Thyroid gland (tissue), 4 donors: ENCODE measurements at regions of chr12 and their contacts with region 1.

Region 1: GRCh38 chr12:112012775-112013600 is at the starts of genes ERP29 and TMEM116:
- DNase-seq: peak; percentile 100
- H3K4me3 ChIP-seq: peak within 1 kb of the TSS; percentile 77 to 93 (median 90)
- H3K27ac ChIP-seq: peak within 1 kb of the TSS; percentile 92 to 98 (median 95)
- H3K4me1 ChIP-seq: peaks cover 22 to 42% of the 10 kb centered on the region in 2 donors
- H3K27me3 ChIP-seq: no peaks in the 10 kb centered on the region
- CTCF ChIP-seq: peak; percentile 16 to 79 (median 62)
- POLR2A ChIP-seq: peak; percentile 85 to 95
- total RNA-seq, gene ERP29: 66.1 to 93.3 (median 80.7) TPM
- total RNA-seq, gene TMEM116: 20.0 to 33.0 (median 26.6) TPM

Region 2: GRCh38 chr12:111584959-111585358 is 428.0 kb before region 1 on chr12:
- intact Hi-C with region 1: no loop called
- DNase-seq: no peak
- H3K4me3 ChIP-seq: no peak overlapping the region
- H3K27ac ChIP-seq: no peak overlapping the region
- H3K4me1 ChIP-seq: no peaks in the 10 kb centered on the region
- H3K27me3 ChIP-seq: no peaks in the 10 kb centered on the region
- CTCF ChIP-seq: no peak
- POLR2A ChIP-seq: no peak

Region 3: DNA sequence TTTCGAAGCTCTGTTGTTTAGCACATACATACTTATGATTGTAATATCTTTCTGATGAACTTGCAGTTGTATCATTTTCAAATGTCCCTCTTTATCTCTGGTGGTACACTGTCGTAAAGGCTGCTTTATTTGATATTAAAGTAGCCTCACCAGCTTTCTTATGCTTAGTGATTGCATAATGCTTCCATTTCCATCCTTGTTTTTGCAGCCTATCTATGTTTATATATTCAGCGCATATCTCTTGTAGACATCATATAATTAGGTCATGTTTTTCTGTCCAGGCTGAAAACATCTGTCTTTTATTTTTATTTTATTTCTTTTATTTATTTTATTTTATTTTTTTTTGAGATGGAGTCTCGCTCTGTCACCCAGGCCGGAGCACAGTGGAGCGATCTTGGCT is 292.5 kb before region 1 on chr12:
- intact Hi-C with region 1: no loop called
- DNase-seq: no peak
- H3K4me3 ChIP-seq: no peak overlapping the region
- H3K27ac ChIP-seq: no peak overlapping the region
- H3K4me1 ChIP-seq: peaks cover 0 to 4% of the 10 kb centered on the region in 2 donors
- H3K27me3 ChIP-seq: no peaks in the 10 kb centered on the region
- CTCF ChIP-seq: no peak
- POLR2A ChIP-seq: no peak

Region 4: DNA sequence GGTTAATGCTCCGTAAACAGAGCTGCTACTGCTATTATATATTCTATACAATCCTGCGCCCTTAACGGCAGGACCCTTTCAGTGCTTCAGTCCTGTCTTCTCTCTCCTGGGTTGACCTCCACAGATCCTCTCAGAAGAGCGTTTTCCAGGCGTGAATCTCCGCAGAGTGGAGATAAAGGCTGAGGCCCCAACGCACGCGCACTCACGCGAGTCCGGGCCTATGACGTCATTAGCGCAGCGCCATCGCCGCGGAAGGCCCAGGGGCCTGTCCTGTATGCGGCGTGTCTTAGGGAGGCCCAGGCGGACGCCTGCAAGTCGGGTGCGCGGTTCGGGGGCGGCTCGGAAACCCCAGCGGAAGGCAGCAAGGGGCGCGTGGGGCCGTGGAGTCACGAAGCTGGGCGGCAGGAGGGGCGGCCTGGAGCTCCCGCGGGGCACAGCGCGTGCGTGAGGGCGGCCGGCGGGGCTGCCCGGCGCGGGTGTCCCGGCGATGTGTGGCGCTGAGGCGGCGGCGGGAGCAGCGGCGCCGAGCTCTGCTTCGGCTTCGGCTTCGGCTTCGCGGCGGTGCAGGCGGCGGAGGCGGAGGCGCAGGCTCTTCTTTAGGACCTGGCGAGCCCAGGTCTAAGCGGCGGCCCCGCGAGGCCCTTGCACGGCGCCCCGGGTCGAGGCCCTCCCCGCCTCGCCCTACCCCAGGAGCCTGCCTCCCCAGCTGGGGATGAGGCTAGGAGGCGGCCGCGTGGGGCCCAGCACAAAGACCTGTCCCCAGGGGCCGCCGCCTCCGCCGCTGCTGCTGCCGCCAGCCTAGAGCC is 171.0 kb before region 1 on chr12 and contains the start of gene MAPKAPK5:
- intact Hi-C with region 1: loop called (anchors 10 kb)
- DNase-seq: peak; percentile 90 to 93
- H3K4me3 ChIP-seq: peak within 1 kb of the TSS; percentile 87 to 90 (median 88)
- H3K27ac ChIP-seq: peak within 1 kb of the TSS; percentile 82 to 91 (median 86)
- H3K4me1 ChIP-seq: peaks cover 15 to 29% of the 10 kb centered on the region in 2 donors
- H3K27me3 ChIP-seq: no peaks in the 10 kb centered on the region
- CTCF ChIP-seq: peak in 1 of 6 experiments; percentile 33
- POLR2A ChIP-seq: peak in 1 of 2 donors; percentile 62
- total RNA-seq, gene MAPKAPK5: 54.3 to 81.6 (median 60.0) TPM

Region 5: GRCh38 chr12:111873113-111873512 is 139.9 kb before region 1 on chr12:
- intact Hi-C with region 1: no loop called
- DNase-seq: no peak
- H3K4me3 ChIP-seq: no peak overlapping the region
- H3K27ac ChIP-seq: no peak overlapping the region
- H3K4me1 ChIP-seq: no peaks in the 10 kb centered on the region
- H3K27me3 ChIP-seq: no peaks in the 10 kb centered on the region
- CTCF ChIP-seq: no peak
- POLR2A ChIP-seq: no peak

Region 6: DNA sequence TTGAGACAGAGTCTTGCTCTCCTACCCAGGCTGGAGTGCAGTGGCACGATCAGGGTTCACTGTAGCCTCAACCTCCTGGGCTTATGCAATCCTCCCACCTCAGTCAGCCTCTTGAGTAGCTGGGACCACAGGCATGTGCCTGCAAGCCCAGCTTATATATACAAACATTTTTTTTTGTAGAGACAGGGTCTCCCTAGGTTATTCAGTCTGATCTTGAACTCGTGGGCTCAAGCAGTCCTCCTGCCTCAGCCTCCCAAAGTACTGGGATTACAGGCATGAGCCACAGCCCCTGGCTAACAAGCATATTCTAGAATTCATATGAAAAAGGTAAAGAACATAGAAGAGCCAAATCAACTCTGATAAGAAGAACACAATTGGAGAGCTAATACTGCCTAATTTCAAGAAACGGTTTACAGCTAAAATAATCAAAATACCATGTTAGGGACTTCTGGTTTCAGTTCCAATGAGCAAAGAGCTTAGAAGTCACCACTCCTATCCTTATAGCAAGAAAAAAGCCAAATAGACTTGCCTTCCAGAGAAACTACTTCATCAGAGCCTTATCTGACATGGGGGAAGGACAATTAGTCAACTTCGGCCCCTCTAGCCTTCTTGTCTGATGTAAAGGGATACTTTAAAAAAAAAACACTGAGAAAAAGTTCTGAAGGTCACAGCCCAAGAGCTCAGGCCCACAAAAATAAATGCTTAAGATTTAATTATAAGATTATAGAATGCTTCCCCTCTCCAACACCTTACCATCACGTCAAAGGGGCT is 37.6 kb before region 1 on chr12:
- intact Hi-C with region 1: no loop called
- DNase-seq: no peak
- H3K4me3 ChIP-seq: no peak overlapping the region
- H3K27ac ChIP-seq: no peak overlapping the region
- H3K4me1 ChIP-seq: no peaks in the 10 kb centered on the region
- H3K27me3 ChIP-seq: no peaks in the 10 kb centered on the region
- CTCF ChIP-seq: no peak
- POLR2A ChIP-seq: no peak